ENCODE measurements at regions of chr14 and their contacts with region 1.

Region 1: DNA sequence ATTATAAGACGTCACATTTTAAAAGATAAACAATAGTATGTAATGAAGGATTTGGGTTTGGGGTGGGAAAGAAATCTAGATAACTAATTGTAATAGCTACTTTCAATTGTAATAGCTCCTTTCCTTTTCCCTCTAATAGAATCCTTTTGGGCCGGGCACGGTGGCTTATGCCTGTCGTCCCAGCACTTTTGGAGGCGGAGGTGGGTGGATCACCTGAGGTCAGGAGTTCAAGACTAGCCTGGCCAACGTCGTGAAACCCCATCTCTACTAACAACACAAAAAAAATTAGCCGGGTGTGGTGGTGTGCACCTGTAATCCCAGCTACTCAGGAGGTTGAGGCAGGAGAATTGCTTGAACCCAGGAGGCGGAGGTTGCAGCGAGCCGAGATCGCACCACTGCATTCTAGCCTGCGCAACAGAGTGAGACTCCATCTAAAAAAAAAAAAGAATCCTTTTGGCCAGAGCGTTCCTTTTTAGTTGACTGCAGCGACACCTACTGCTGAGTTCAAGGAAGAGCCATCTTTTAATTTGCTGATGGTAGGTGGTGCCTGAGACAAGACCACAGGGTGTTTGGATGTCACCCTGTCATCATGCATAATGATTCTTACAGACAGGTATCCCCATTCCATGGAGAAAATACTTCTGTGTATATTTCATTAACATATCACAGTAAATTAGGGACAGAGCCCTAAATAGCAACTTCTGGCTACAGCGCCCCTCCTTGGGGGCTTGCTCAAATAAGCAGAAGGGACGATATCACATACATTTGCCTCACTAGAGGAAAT is 79.5 kb downstream of the ARMH4 start:
- DNase-seq: peak; percentile 79
- H3K4me3 Mint-ChIP-seq: no peak overlapping the region
- H3K27ac Mint-ChIP-seq: no peak overlapping the region
- H3K4me1 Mint-ChIP-seq: peaks cover 1% of the 10 kb centered on the region
- H3K27me3 Mint-ChIP-seq: no peaks in the 10 kb centered on the region
- CTCF ChIP-seq: peak; percentile 59

Region 2: GRCh38 chr14:57486767-57487379 is 585.6 kb before region 1 on chr14:
- CTCF ChIA-PET with region 1: interaction called, 15 read pairs
- POLR2A ChIA-PET with region 1: no interaction called
- intact Hi-C with region 1: loop called (anchors 1 kb)
- DNase-seq: peak; percentile 64
- H3K4me3 Mint-ChIP-seq: no peak overlapping the region
- H3K27ac Mint-ChIP-seq: no peak overlapping the region
- H3K4me1 Mint-ChIP-seq: no peaks in the 10 kb centered on the region
- H3K27me3 Mint-ChIP-seq: no peaks in the 10 kb centered on the region
- CTCF ChIP-seq: peak; percentile 62

Region 3: DNA sequence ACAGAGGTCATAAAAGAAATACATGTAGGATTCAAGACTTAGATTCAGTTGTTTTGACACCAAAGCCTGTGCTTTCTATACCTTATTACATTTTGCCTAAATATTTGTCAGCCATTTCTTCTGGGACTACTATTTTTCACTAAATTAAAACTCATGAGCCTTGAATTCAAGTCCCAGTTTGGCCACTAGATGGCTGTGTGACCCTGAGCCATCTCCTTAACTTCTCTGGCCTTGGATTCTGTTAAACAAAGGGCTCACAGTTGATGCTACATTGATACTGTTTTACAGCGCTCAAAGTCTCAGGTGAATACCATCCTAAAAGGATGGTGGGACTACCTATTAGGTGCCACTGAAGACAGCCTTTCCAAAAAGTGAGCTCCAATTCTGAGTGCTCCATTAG is 539.3 kb before region 1 on chr14:
- CTCF ChIA-PET with region 1: interaction called, 3 read pairs
- POLR2A ChIA-PET with region 1: no interaction called
- intact Hi-C with region 1: loop called (anchors 2 kb)
- DNase-seq: peak; percentile 47
- H3K4me3 Mint-ChIP-seq: no peak overlapping the region
- H3K27ac Mint-ChIP-seq: no peak overlapping the region
- H3K4me1 Mint-ChIP-seq: no peaks in the 10 kb centered on the region
- H3K27me3 Mint-ChIP-seq: no peaks in the 10 kb centered on the region
- CTCF ChIP-seq: peak; percentile 35

Region 4: GRCh38 chr14:57692671-57693070 is 379.8 kb before region 1 on chr14:
- CTCF ChIA-PET with region 1: interaction called, 93 read pairs
- POLR2A ChIA-PET with region 1: interaction called, 4 read pairs
- intact Hi-C with region 1: loop called (anchors 1 kb)
- DNase-seq: peak; percentile 69
- H3K4me3 Mint-ChIP-seq: no peak overlapping the region
- H3K27ac Mint-ChIP-seq: no peak overlapping the region
- H3K4me1 Mint-ChIP-seq: no peaks in the 10 kb centered on the region
- H3K27me3 Mint-ChIP-seq: no peaks in the 10 kb centered on the region
- CTCF ChIP-seq: peak; percentile 80

Region 5: GRCh38 chr14:57714487-57714931 is 358.0 kb before region 1 on chr14:
- CTCF ChIA-PET with region 1: interaction called, 15 read pairs
- POLR2A ChIA-PET with region 1: no interaction called
- intact Hi-C with region 1: no loop called
- DNase-seq: no peak
- H3K4me3 Mint-ChIP-seq: no peak overlapping the region
- H3K27ac Mint-ChIP-seq: no peak overlapping the region
- H3K4me1 Mint-ChIP-seq: peaks cover 5% of the 10 kb centered on the region
- H3K27me3 Mint-ChIP-seq: no peaks in the 10 kb centered on the region
- CTCF ChIP-seq: no peak